ENCODE measurements at regions of chr1 and their contacts with region 1.

Region 1: GRCh38 chr1:8097077-8097799 is 71.1 kb upstream of the ERRFI1 start:
- DNase-seq: peak; percentile 13
- H3K4me3 Mint-ChIP-seq: peak overlapping the region; percentile 53
- H3K27ac Mint-ChIP-seq: peak overlapping the region; percentile 90
- H3K4me1 Mint-ChIP-seq: peaks cover 47% of the 10 kb centered on the region
- H3K27me3 Mint-ChIP-seq: no peaks in the 10 kb centered on the region

Region 2: GRCh38 chr1:7922301-7922700 is 174.9 kb before region 1 on chr1:
- intact Hi-C with region 1: no loop called
- DNase-seq: no peak
- H3K4me3 Mint-ChIP-seq: no peak overlapping the region
- H3K27ac Mint-ChIP-seq: peak overlapping the region; percentile 43
- H3K4me1 Mint-ChIP-seq: peaks cover 26% of the 10 kb centered on the region
- H3K27me3 Mint-ChIP-seq: no peaks in the 10 kb centered on the region

Region 3: DNA sequence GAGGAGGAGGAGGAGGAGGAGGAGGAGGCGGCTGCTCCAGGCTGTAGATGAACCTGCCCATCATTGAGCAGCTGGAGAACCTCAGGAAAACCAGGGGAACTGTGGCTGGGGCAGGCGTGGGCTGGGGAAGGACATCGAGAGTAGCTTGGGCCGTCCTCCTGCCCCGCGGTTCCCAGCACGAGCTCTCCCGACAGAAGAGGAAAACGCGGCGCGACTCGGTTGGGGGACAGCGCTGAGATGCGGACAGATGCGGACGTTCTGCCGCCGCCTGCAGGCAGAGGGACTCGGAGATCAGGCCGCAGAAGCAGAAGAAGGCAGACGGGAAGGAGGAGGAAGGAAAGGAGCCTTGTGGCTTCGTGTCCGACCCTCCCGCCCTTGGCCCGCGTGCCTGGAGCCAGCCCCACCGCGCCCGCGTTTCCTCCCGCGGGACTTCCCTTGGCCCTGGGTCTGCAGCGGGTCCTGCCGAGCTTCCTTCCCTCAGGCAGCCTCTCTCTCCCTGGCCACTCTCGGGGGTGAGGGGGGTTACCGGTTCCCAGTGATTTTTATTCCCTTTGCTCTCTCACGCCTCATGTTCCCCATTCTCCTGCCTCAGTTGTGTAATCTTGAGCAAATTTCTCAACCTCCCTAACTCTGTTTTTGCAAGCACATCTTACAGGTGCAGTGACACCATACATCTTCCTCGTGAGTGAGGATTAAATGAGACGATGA is 154.9 kb before region 1 on chr1:
- intact Hi-C with region 1: loop called (anchors 5 kb)
- DNase-seq: no peak
- H3K4me3 Mint-ChIP-seq: peak overlapping the region; percentile 77
- H3K27ac Mint-ChIP-seq: peak overlapping the region; percentile 91
- H3K4me1 Mint-ChIP-seq: peaks cover 57% of the 10 kb centered on the region
- H3K27me3 Mint-ChIP-seq: no peaks in the 10 kb centered on the region

Region 4: DNA sequence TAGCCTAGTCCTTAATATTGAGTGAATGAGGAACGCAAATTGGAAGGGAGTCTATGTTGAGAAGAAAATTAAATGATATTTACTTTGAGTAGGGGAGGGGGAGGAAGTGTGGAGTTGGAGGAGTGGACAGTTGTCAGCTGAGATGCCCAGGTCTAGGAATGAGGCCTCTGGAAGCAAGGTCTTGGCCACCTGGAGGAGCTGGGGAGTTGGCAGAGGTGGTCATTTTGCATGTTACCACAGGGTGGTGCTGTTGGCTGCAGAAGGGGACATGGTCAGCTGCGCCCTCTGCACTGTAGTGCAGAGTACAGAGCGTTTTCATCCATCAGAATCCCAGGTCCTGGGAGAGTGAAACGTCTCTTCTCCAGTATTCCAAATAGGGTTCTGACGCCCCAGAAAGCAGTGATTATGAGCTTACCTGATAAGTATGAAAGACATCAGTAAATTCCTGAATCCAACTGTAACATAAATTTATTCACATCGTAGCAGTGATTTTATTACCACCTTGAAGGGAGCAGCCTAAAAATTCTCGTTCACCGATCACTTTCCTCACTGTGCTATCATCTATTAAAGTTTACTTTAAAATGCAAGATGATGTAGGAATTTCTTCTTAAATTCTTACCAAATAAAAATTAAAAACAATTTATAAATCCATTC is 121.9 kb before region 1 on chr1:
- intact Hi-C with region 1: no loop called
- DNase-seq: no peak
- H3K4me3 Mint-ChIP-seq: no peak overlapping the region
- H3K27ac Mint-ChIP-seq: no peak overlapping the region
- H3K4me1 Mint-ChIP-seq: peaks cover 6% of the 10 kb centered on the region
- H3K27me3 Mint-ChIP-seq: no peaks in the 10 kb centered on the region

Region 5: GRCh38 chr1:8047681-8048445 is 49.4 kb before region 1 on chr1:
- intact Hi-C with region 1: loop called (anchors 5 kb)
- DNase-seq: no peak
- H3K4me3 Mint-ChIP-seq: no peak overlapping the region
- H3K27ac Mint-ChIP-seq: no peak overlapping the region
- H3K4me1 Mint-ChIP-seq: peaks cover 18% of the 10 kb centered on the region
- H3K27me3 Mint-ChIP-seq: no peaks in the 10 kb centered on the region

Region 6: DNA sequence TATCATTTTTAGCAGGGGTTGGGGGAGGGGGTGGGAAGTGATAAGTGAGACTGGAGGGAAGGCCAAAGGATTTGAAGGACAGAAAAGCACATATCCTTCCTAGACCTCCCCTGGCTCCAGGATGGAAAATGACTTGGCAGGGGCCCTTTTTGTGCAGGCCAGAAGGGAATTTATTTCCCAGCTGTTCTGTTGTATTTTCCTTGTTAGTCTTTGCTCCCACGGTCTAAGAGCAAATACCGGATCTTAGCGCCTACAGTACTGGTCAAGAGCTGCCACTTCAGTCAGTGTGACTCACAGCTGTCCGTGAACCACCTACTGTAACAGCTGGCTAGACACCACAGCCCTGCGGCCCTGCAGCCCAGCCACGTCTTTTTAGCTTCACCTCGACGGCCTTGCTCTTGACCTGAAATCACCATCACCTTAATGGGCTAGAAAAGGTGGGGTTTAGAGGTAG is 20.1 kb before region 1 on chr1:
- intact Hi-C with region 1: no loop called
- DNase-seq: no peak
- H3K4me3 Mint-ChIP-seq: no peak overlapping the region
- H3K27ac Mint-ChIP-seq: no peak overlapping the region
- H3K4me1 Mint-ChIP-seq: peaks cover 9% of the 10 kb centered on the region
- H3K27me3 Mint-ChIP-seq: no peaks in the 10 kb centered on the region

Region 7: DNA sequence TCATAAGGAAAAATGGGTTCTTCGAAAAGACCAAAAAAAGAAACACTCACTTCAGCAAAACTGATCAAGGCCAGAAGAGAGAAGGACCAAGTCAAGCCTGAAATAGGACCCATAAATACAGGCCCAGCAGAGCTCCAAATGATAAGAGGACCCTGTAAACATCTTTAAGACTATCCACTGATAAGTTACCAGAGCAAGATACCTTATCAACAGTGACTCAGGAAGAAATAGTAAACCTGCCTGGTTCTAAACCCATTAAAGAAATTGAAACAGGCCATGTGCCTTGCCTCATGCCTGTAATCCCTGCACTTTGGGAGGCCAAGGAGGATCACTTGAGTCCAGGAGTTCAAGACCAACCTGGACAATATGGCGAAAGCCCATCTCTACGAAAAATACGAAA is 10.7 kb after region 1 on chr1:
- intact Hi-C with region 1: no loop called
- DNase-seq: no peak
- H3K4me3 Mint-ChIP-seq: no peak overlapping the region
- H3K27ac Mint-ChIP-seq: no peak overlapping the region
- H3K4me1 Mint-ChIP-seq: peaks cover 2% of the 10 kb centered on the region
- H3K27me3 Mint-ChIP-seq: peaks cover 3% of the 10 kb centered on the region

Region 8: DNA sequence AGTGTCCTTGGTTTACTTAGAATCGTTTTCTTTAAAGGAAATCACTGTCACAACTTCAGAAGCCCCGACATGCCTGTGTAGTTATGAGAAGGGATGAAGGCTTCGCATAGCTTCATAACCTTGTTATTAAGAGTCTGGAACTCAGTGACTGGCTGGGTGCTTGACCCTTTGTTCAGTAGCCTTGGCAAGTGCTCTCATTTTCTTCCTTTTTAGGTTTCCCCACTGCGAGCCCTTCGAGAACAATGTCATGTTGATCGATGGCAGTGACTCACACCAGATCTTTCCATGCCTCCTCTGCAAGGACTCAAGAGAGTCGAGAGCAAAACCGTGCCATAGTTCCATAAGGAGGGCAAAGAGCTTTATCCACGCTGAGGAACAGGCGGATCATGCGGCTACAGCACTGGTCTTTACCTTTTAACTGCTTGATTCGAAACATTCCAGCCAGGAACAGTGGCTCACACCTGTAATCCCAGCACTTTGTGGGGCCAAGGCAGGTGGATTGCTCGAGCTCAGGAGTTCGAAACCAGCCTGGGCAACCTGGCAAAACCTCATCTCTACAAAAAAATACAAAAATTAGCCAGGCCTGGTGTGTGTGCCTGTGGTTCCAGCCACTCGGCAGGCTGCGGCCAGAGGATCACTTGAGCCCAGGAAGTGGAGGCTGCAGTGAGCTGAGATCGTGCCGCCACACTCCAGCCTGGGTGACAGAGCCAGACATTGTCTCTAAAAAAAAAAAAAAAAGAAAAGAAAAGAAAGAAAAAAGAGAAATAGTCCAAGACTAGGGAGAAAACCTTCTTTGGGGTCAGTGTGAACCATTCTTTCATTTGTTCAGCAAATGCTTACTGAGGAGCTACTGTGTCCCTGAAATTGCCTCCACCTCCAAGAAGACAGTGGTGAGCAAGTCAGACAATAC is 24.3 kb after region 1 on chr1:
- intact Hi-C with region 1: loop called (anchors 2 kb)
- DNase-seq: no peak
- H3K4me3 Mint-ChIP-seq: no peak overlapping the region
- H3K27ac Mint-ChIP-seq: no peak overlapping the region
- H3K4me1 Mint-ChIP-seq: peaks cover 19% of the 10 kb centered on the region
- H3K27me3 Mint-ChIP-seq: no peaks in the 10 kb centered on the region

Region 9: DNA sequence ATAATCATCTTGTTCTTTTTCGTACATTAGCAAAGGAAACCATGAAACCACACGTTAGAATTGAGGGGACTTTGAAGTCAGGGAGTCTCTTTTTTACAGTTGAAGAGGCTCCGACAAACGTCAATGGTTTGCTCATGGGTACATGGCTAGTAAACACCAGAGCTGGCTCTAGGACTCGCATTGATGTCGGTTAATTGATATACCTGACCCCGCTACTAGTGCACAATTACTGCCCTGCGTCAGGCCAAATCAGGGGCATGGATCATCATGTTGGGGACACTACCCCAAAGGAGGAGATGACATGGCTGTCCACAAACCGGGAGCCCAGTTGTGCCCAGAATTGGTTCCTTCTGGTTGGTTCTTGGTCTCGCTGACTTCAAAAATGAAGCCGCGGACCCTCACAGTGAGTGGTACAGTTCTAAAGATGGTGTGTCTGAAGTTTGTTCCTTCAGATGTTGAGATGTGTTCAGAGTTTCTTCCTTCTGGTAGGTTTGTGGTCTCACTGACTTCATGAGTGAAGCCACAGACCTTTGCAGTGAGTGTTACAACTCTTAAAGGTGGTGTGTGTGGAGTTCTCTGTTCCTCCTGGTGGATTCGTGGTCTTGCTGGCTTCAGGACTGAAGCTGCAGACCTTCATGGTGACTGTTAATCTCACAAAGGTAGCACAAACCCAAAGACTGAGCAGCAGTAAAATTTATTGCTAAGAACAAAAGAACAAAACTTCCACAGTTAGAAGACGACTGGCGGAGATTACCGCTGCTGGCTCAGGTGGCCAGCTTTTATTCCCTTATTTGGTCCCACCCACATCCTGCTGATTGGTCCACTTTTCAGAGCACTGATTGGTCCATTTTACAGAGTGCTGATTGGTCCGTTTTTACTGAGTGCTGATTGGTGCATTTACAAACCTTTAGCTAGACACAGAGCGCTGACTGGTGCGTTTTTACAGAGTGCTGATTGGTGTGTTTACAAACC is 55.8 kb after region 1 on chr1:
- intact Hi-C with region 1: loop called (anchors 1 kb)
- DNase-seq: peak; percentile 47
- H3K4me3 Mint-ChIP-seq: peak overlapping the region; percentile 32
- H3K27ac Mint-ChIP-seq: peak overlapping the region; percentile 94
- H3K4me1 Mint-ChIP-seq: peaks cover 36% of the 10 kb centered on the region
- H3K27me3 Mint-ChIP-seq: peaks cover 2% of the 10 kb centered on the region

Region 10: DNA sequence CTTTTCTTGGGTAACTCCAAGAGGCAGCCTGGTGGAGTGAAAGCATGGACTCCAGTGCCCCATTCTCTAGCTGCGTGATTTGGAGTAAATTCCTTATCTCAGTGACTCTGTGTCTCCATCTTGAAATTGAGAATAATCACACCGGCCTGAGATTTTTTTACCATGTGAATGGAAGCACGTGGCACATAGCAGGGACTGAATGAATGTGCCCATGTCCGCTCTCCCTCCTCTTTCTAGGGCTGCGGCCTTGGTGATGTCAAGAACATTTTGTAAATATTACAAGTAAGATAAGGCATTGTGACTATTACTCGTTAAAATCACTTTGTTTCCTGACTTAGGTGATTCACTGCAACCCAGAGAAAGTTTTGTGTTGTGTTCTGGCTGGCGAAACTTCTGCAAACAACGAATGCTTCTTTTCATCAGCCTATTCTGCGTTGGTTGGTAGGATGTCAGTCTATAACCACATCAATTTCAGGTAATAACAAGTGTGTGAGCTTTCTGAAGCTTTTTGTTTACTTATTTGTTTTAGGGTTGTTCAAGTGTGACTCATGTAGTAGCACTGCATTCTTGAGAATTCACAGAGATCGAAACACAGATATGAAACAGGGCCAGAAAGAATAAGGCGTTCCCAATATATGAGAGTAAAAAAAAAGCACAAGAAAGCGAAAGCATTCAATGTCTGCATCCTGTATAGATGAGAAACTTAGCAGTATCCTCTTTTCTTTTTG is 85.0 kb after region 1 on chr1:
- intact Hi-C with region 1: loop called (anchors 2 kb)
- DNase-seq: peak; percentile 33
- H3K4me3 Mint-ChIP-seq: no peak overlapping the region
- H3K27ac Mint-ChIP-seq: peak overlapping the region; percentile 86
- H3K4me1 Mint-ChIP-seq: peaks cover 18% of the 10 kb centered on the region
- H3K27me3 Mint-ChIP-seq: no peaks in the 10 kb centered on the region